ENCODE measurements at regions of chr10 and their contacts with region 1.

Region 1: GRCh38 chr10:93368210-93368609 is 113.9 kb downstream of the MYOF start:
- DNase-seq: no peak
- H3K4me3 ChIP-seq: no peak overlapping the region
- H3K27me3 ChIP-seq: no peaks in the 10 kb centered on the region
- CTCF ChIP-seq: no peak

Region 2: GRCh38 chr10:93352638-93353383 is 15.4 kb before region 1 on chr10:
- CTCF ChIA-PET with region 1: interaction called, 12 read pairs
- POLR2A ChIA-PET with region 1: interaction called, 3 read pairs
- DNase-seq: no peak
- H3K4me3 ChIP-seq: no peak overlapping the region
- H3K27me3 ChIP-seq: no peaks in the 10 kb centered on the region
- CTCF ChIP-seq: peak; percentile 55

Region 3: DNA sequence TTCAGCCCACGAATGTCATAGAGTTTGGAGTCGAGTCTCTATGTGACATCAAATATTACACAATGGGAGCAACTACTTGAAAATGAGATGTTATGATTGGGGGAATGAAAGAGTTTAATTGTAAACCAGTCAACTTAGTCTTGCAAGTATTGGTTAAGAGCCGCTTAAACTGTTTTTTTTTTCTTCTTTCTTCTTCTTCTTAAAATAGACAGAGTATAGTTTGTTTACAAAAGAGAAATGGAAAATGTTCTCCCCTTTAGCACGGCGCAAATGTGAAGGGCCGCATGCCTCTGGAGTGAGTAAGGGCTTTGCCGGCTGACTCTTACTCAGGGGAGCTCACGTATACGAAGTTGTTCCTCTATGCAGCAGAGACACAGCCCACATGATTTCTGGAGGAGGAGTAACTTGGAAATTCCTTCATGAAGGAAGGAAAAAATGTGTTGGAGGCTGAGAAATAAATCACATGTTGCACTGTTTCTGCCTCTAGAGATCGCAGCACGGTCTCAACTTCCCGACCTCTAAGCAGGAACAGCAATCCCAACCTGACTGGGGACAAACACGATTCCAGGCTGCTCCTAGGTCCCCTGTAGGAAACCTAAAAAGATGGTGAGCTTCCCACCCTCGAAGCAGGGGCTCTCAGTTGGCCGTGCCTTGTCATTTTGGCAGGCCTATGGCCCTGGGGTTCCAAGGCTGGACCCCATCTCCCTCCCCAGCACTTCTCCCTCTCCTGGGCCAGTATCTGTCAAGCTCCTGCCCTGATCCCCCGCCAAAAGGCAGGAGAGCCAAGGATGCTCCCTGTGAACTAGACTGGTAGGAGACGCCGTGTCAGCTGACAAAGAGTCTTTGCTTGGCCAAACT is 69.1 kb after region 1 on chr10:
- CTCF ChIA-PET with region 1: no interaction called
- POLR2A ChIA-PET with region 1: interaction called, 16 read pairs
- DNase-seq: peak; percentile 99
- H3K4me3 ChIP-seq: no peak overlapping the region
- H3K27me3 ChIP-seq: no peaks in the 10 kb centered on the region
- CTCF ChIP-seq: no peak

Measured in BJ (cell line).